ENCODE measurements at regions of chr6 and their contacts with region 1.

Region 1: GRCh38 chr6:82410151-82410621 is 46.6 kb downstream of the TPBG start:
- DNase-seq: no peak
- ATAC-seq: no peak

Region 2: DNA sequence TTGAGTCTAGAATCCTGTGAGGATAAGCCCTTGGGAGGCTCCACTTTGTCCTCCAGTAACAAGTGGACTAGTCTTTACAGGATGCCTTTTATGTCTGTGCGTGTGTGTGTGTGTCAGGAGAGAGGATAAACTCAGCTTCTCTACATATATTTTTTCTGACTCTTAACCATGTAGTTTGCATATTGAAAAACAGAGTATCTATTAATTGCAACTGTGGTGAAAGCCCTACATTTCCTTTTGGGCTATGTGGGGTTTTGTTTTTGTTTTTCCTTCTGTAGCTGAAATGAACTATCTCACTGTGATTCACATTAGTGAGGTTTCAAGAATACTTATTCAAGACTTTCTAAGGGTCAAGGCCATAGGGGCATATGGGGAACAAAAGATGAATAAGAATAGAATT is 28.9 kb before region 1 on chr6:
- intact Hi-C with region 1: no loop called
- DNase-seq: no peak
- ATAC-seq: no peak

Region 3: DNA sequence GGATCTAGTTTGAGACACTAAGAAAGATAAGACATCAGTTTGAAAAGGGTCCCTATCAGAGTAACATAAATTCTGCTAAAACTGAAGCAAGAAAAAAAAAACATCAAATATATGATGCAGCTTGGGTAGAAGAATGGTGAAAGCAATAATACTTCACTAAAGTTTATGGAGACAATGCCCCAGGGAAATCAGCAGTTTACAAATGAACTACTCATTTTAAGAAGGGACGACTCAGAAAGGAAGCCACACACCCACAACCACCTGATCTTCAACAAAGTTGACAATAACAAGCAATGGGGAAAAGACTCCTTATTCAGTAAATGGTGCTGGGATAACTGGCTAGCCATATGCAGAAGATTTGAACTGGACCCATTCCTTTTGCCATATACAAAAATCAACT is 96.9 kb after region 1 on chr6:
- intact Hi-C with region 1: loop called (anchors 5 kb)
- DNase-seq: no peak
- ATAC-seq: no peak